ENCODE measurements at regions of chr13 and their contacts with region 1.

Region 1: DNA sequence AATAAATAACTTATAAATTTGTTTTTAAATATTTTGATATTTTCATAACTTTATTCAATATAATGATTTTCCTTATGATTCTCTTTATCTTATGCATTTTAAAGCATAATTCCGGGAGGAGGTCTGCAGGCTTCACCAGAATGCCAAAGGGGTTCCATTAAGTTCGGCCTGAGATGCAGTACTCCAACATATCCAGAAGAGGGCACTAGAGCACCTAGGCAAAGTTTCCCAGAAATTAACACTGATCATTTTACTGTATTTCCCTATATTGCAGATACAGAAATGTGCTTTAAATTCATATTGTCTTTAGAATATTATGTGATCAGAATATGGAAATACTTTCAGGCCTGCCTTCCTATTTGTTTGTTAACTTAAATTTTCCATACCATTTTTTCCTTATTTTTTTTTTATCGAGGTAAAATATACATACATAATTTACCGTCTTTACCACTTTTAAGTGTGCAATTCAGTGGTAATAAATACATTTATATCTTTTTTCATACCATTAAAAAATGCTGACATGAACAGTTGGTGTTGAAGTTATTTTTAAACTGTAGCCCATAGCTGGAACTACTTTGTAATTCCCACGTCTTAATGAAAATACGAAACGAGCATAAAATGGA is 58.9 kb upstream of the TM9SF2 start:
- DNase-seq: peak in 7 of 9 donors; percentile 50 to 75 (median 68)
- ATAC-seq: peak; percentile 95
- H3K4me3 ChIP-seq: no peak overlapping the region
- H3K4me3 Mint-ChIP-seq: no peak overlapping the region
- H3K27ac ChIP-seq: no peak overlapping the region
- H3K27ac Mint-ChIP-seq: peak overlapping the region in 1 of 9 donors; percentile 47
- H3K4me1 ChIP-seq: peaks cover 0 to 3% of the 10 kb centered on the region in 2 donors
- H3K4me1 Mint-ChIP-seq: peaks cover 2 to 17% (median 7%) of the 10 kb centered on the region in 7 donors
- H3K27me3 ChIP-seq: no peaks in the 10 kb centered on the region
- H3K27me3 Mint-ChIP-seq: peaks cover 0 to 30% (median 0%) of the 10 kb centered on the region in 5 donors

Region 2: DNA sequence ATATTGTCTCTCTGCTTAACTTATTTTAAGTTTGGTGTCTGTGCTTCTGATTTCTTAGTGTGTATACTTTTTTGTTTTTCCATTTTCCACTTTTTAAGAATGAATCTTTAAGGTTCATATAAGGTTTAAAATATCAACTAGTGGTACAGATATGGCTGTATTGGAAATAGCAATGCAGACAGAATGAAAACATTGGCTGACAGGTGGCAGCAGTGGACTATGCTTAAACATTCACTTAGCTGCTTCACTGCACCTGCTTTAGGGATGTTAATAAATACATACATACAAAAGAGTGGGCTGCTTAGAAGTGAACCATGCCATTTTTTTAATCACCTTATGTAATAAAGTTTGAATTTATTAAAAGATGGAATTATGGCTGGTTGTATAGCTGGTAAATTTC is 86.2 kb after region 1 on chr13:
- CTCF ChIA-PET with region 1: interaction called, 3 read pairs
- POLR2A ChIA-PET with region 1: no interaction called
- intact Hi-C with region 1: loop called (anchors 1 kb)
- DNase-seq: peak in 6 of 9 donors; percentile 9 to 57 (median 48)
- ATAC-seq: peak; percentile 68
- H3K4me3 ChIP-seq: no peak overlapping the region
- H3K4me3 Mint-ChIP-seq: peak overlapping the region in 2 of 10 donors; percentile 12 to 25
- H3K27ac ChIP-seq: no peak overlapping the region
- H3K27ac Mint-ChIP-seq: no peak overlapping the region
- H3K4me1 ChIP-seq: peaks cover 8 to 17% of the 10 kb centered on the region in 2 donors
- H3K4me1 Mint-ChIP-seq: peaks cover 33 to 63% (median 47%) of the 10 kb centered on the region in 7 donors
- H3K27me3 ChIP-seq: no peaks in the 10 kb centered on the region
- H3K27me3 Mint-ChIP-seq: no peaks in the 10 kb centered on the region

Region 3: GRCh38 chr13:99895223-99895994 is 453.0 kb after region 1 on chr13:
- CTCF ChIA-PET with region 1: no interaction called
- POLR2A ChIA-PET with region 1: no interaction called
- intact Hi-C with region 1: loop called in 1 of 2 experiments (anchors 10 kb)
- DNase-seq: peak in 2 of 9 donors; percentile 10 to 27
- ATAC-seq: peak; percentile 14
- H3K4me3 ChIP-seq: peak overlapping the region; percentile 62
- H3K4me3 Mint-ChIP-seq: peak overlapping the region; percentile 39 to 96 (median 82)
- H3K27ac ChIP-seq: no peak overlapping the region
- H3K27ac Mint-ChIP-seq: peak overlapping the region in 1 of 9 donors; percentile 72
- H3K4me1 ChIP-seq: peaks cover 7% of the 10 kb centered on the region in 2 donors
- H3K4me1 Mint-ChIP-seq: peaks cover 7 to 24% (median 16%) of the 10 kb centered on the region in 7 donors
- H3K27me3 ChIP-seq: peaks cover 6 to 28% of the 10 kb centered on the region in 2 donors
- H3K27me3 Mint-ChIP-seq: peaks cover 50 to 68% (median 54%) of the 10 kb centered on the region in 5 donors

Region 4: GRCh38 chr13:100365680-100366079 is 923.3 kb after region 1 on chr13:
- CTCF ChIA-PET with region 1: no interaction called
- POLR2A ChIA-PET with region 1: no interaction called
- intact Hi-C with region 1: no loop called
- DNase-seq: no peak
- ATAC-seq: no peak
- H3K4me3 ChIP-seq: no peak overlapping the region
- H3K4me3 Mint-ChIP-seq: no peak overlapping the region
- H3K27ac ChIP-seq: no peak overlapping the region
- H3K27ac Mint-ChIP-seq: no peak overlapping the region
- H3K4me1 ChIP-seq: no peaks in the 10 kb centered on the region
- H3K4me1 Mint-ChIP-seq: peaks cover 0 to 13% (median 0%) of the 10 kb centered on the region in 7 donors
- H3K27me3 ChIP-seq: no peaks in the 10 kb centered on the region
- H3K27me3 Mint-ChIP-seq: no peaks in the 10 kb centered on the region

Region 5: DNA sequence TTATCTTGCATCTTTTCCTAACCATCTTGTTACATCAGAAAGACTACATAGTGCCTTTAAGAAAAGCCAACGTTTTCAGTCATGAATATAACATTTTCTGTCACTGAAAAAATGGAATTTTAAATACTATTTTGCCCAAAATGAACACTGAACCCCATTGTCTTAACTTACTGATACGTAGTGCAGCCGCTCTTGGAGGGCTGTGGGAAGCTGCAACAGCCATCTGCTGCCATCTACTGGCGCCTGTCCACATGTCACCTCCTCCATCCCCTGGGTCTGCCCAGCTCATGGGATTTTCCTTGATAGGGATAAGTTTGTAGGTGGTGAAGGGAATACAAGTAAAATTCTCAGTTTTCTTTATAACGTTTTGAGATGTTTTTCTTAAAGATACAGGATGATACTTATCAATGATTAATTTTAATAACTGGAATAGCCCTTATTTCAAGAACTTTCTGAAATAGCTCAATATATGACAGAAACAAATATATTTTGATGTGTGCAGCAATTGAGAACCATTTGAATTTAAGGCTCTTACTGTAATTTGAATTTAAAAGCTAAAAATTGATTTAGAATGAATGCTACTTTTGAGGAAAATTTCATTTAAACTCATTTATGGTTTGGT is 1072.5 kb after region 1 on chr13:
- CTCF ChIA-PET with region 1: interaction called, 9 read pairs
- POLR2A ChIA-PET with region 1: no interaction called
- intact Hi-C with region 1: loop called (anchors 1 to 5 kb)
- DNase-seq: peak; percentile 37 to 74 (median 63)
- ATAC-seq: peak; percentile 94
- H3K4me3 ChIP-seq: no peak overlapping the region
- H3K4me3 Mint-ChIP-seq: no peak overlapping the region
- H3K27ac ChIP-seq: no peak overlapping the region
- H3K27ac Mint-ChIP-seq: peak overlapping the region in 1 of 9 donors; percentile 80
- H3K4me1 ChIP-seq: peaks cover 0 to 7% of the 10 kb centered on the region in 2 donors
- H3K4me1 Mint-ChIP-seq: peaks cover 0 to 30% (median 6%) of the 10 kb centered on the region in 7 donors
- H3K27me3 ChIP-seq: no peaks in the 10 kb centered on the region
- H3K27me3 Mint-ChIP-seq: peaks cover 0 to 4% (median 0%) of the 10 kb centered on the region in 5 donors

Measured in naive thymus-derived CD4-positive, alpha-beta T cell (primary cell).